Naive thymus-derived CD4-positive, alpha-beta T cell (primary cell): ENCODE measurements at regions of chr4 and their contacts with region 1.

Region 1: GRCh38 chr4:80434238-80434637 is 98.7 kb downstream of the CFAP299 start:
- DNase-seq: no peak
- ATAC-seq: no peak
- H3K4me3 ChIP-seq: no peak overlapping the region
- H3K4me3 Mint-ChIP-seq: no peak overlapping the region
- H3K27ac ChIP-seq: no peak overlapping the region
- H3K27ac Mint-ChIP-seq: peak overlapping the region in 1 of 9 donors; percentile 34
- H3K4me1 ChIP-seq: peaks cover 3 to 13% of the 10 kb centered on the region in 2 donors
- H3K4me1 Mint-ChIP-seq: peaks cover 3 to 42% (median 31%) of the 10 kb centered on the region in 7 donors
- H3K27me3 ChIP-seq: no peaks in the 10 kb centered on the region
- H3K27me3 Mint-ChIP-seq: peaks cover 0 to 2% (median 0%) of the 10 kb centered on the region in 5 donors

Region 2: DNA sequence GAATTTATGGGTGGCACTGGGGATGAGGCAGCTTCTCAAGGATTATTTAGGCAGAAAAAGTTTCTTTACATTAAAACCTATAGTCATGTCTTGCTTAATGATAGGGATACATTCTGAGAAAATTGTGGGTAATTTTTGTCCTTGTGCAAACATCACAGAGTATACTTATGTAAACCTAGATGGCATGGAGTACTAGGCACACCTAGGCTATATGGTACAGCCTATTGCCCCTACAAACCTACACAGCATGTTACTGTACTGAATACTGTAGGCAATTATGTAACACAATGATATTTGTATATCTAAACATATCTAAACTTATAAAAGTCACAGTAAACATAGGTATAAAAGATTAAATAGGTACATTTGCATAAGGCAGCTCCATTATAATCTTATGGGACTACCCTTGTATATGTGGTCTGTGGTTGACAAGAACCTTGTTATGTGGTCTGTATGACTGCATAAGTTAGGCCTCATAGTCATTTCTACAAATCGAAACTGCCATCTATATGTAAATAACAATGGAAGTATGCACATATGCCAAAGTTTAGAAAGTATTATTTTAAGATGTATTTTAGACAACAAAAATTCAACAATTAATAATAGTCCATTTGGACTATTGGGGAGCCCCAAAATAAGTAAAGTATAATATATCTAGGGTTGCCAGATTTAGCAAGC is 11.4 kb before region 1 on chr4:
- CTCF ChIA-PET with region 1: no interaction called
- POLR2A ChIA-PET with region 1: interaction called, 3 read pairs
- intact Hi-C with region 1: loop called in 1 of 2 experiments (anchors 2 kb)
- DNase-seq: peak in 4 of 9 donors; percentile 18 to 47 (median 22)
- ATAC-seq: peak; percentile 78
- H3K4me3 ChIP-seq: no peak overlapping the region
- H3K4me3 Mint-ChIP-seq: no peak overlapping the region
- H3K27ac ChIP-seq: no peak overlapping the region
- H3K27ac Mint-ChIP-seq: no peak overlapping the region
- H3K4me1 ChIP-seq: peaks cover 0 to 13% of the 10 kb centered on the region in 2 donors
- H3K4me1 Mint-ChIP-seq: peaks cover 2 to 28% (median 16%) of the 10 kb centered on the region in 7 donors
- H3K27me3 ChIP-seq: no peaks in the 10 kb centered on the region
- H3K27me3 Mint-ChIP-seq: no peaks in the 10 kb centered on the region